PC-9 (cell line): ENCODE measurements at regions of chr11 and their contacts with region 1.

Region 1: GRCh38 chr11:124673333-124674167 is at the starts of genes SIAE and SPA17:
- DNase-seq: peak; percentile 91 to 93
- H3K4me3 ChIP-seq: peak within 1 kb of the TSS; percentile 83
- H3K27ac ChIP-seq: peak within 1 kb of the TSS; percentile 50
- H3K4me1 ChIP-seq: peaks cover 18% of the 10 kb centered on the region
- H3K27me3 ChIP-seq: no peaks in the 10 kb centered on the region
- CTCF ChIP-seq: no peak
- total RNA-seq, gene SIAE: 29.2 and 37.9 TPM in 2 replicates
- total RNA-seq, gene SPA17: 6.1 and 15.7 TPM in 2 replicates

Region 2: GRCh38 chr11:124746621-124747243 is 73.2 kb after region 1 on chr11:
- CTCF ChIA-PET with region 1: no interaction called
- POLR2A ChIA-PET with region 1: interaction called, 7 read pairs
- intact Hi-C with region 1: loop called (anchors 2 kb)
- DNase-seq: peak; percentile 84 to 92
- H3K4me3 ChIP-seq: peak overlapping the region; percentile 67
- H3K27ac ChIP-seq: peak overlapping the region; percentile 90
- H3K4me1 ChIP-seq: peaks cover 45% of the 10 kb centered on the region
- H3K27me3 ChIP-seq: no peaks in the 10 kb centered on the region
- CTCF ChIP-seq: peak; percentile 75

Region 3: GRCh38 chr11:124753205-124753604 is 79.7 kb after region 1 on chr11:
- CTCF ChIA-PET with region 1: no interaction called
- POLR2A ChIA-PET with region 1: interaction called, 15 read pairs
- intact Hi-C with region 1: no loop called
- DNase-seq: peak in 1 of 2 experiments; percentile 55
- H3K4me3 ChIP-seq: peak overlapping the region; percentile 62; the same call in 1 of the 2 replicates
- H3K27ac ChIP-seq: no peak overlapping the region
- H3K4me1 ChIP-seq: peaks cover 48% of the 10 kb centered on the region
- H3K27me3 ChIP-seq: no peaks in the 10 kb centered on the region
- CTCF ChIP-seq: no peak

Region 4: GRCh38 chr11:124793466-124794278 is 120.1 kb after region 1 on chr11:
- CTCF ChIA-PET with region 1: interaction called, 10 read pairs
- POLR2A ChIA-PET with region 1: interaction called, 8 read pairs
- intact Hi-C with region 1: loop called (anchors 1 kb)
- DNase-seq: peak; percentile 31 to 67
- H3K4me3 ChIP-seq: no peak overlapping the region
- H3K27ac ChIP-seq: no peak overlapping the region
- H3K4me1 ChIP-seq: peaks cover 33% of the 10 kb centered on the region
- H3K27me3 ChIP-seq: no peaks in the 10 kb centered on the region
- CTCF ChIP-seq: peak; percentile 81

Region 5: GRCh38 chr11:124953753-124954589 is 280.4 kb after region 1 on chr11 and contains the start of gene CCDC15:
- CTCF ChIA-PET with region 1: no interaction called
- POLR2A ChIA-PET with region 1: no interaction called
- intact Hi-C with region 1: loop called (anchors 5 kb)
- DNase-seq: peak; percentile 92 to 93
- H3K4me3 ChIP-seq: peak within 1 kb of the TSS; percentile 81
- H3K27ac ChIP-seq: peak within 1 kb of the TSS; percentile 64
- H3K4me1 ChIP-seq: peaks cover 16% of the 10 kb centered on the region
- H3K27me3 ChIP-seq: no peaks in the 10 kb centered on the region
- CTCF ChIP-seq: no peak
- total RNA-seq, gene CCDC15: 2.7 and 2.8 TPM in 2 replicates

Region 6: DNA sequence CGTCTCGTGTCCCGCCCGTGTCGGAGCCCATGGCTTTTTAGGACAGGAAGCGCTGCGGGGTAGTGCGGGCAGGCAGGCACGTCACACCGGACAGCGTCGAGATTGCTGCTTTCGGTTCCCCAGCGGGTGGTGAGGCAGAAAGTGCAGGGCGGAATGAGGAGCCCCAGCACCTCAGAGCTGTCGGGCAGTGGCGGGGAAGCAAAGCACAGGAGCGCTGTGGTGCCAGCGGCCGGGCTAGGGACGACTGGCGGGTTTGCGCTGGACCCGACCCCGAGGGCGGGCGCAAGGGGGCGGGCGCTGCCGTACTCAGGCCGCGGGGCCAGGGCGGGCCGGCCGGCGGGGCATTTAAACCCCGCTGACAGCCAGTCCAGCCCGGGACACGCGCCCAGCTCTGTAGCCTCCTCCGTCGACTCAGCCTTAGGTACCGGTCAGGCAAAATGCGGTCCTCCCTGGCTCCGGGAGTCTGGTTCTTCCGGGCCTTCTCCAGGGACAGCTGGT is 389.4 kb after region 1 on chr11 and contains the start of gene SLC37A2:
- CTCF ChIA-PET with region 1: interaction called, 10 read pairs
- POLR2A ChIA-PET with region 1: no interaction called
- intact Hi-C with region 1: no loop called
- DNase-seq: peak; percentile 68 to 74
- H3K4me3 ChIP-seq: peak within 1 kb of the TSS; percentile 73
- H3K27ac ChIP-seq: peak within 1 kb of the TSS; percentile 36
- H3K4me1 ChIP-seq: peaks cover 10% of the 10 kb centered on the region; the same call in 1 of the 2 replicates
- H3K27me3 ChIP-seq: no peaks in the 10 kb centered on the region
- CTCF ChIP-seq: no peak; the same call in 1 of the 2 replicates
- total RNA-seq, gene SLC37A2: 14.6 and 24.0 TPM in 2 replicates